ENCODE measurements at regions of chr17 and their contacts with region 1.

Region 1: DNA sequence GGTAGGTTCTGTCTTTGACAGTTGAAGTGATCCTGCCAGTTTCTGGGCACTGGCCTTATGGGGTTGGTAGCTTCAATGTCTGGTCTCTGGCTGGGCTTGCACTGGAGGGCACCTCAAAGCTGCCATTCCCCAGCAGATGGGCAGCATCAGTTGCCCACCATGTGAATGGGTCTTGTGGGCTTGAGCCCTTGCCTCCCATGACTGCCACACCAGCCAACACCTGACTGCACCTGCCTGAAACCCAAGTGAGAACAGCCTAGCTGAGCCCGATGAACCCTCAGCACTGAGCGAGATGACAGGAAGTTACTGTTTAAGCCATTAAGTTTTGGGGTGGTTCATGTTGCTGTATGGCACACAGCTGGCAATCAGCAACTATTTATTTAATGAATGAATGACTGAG is 69.1 kb upstream of the AXIN2 start:
- DNase-seq: no peak
- ATAC-seq: no peak
- H3K4me3 ChIP-seq: no peak overlapping the region
- H3K27ac ChIP-seq: no peak overlapping the region
- H3K4me1 ChIP-seq: no peaks in the 10 kb centered on the region
- H3K27me3 ChIP-seq: no peaks in the 10 kb centered on the region
- CTCF ChIP-seq: no peak
- POLR2A ChIP-seq: no peak

Region 2: DNA sequence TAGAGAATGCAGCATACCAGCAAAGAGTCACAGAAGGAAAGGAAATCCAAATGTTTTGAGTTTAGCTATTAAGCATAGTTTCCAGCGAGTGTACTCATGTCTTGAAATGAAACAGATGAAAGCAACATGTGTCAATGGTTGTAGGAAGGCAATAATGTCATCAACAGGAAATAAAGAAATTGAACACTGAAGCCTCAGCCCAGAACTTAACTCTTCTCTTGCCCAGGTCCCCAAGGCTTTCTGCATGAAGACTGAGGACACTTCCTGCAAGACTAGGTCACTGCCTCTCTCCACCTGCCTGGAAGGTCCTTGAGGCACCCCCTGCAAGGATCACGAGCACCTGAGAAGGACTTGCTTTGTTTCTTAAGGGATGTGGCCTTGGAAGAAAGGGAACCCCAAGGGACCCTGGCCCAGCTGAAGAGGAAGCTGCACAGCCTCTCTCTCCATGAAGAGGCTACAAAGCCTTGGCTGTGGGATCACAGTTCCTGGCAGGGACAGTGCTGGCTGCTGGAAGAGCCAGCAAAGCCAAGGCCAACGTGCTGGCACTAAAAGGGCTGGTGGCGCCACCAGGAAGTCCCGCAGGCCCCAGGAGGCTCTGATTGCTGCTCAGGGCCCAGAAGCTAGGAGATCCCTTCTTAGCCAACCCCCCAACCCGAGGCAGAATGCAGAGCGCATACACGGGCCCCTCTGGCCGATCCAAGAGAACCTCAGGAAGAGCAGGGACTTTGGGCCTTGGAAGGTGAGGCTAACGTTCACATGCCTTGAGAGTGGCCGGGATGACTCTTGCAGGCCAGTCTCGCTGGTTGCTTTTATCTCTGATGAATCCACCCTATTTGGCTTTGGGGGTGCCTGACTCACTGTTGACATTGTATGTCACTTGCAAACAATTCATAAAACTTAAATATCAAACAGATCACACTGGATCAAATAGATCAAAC is 45.6 kb before region 1 on chr17:
- in situ Hi-C with region 1: no loop called
- intact Hi-C with region 1: no loop called
- DNase-seq: peak in 1 of 2 donors; percentile 55
- ATAC-seq: peak; percentile 37 to 78
- H3K4me3 ChIP-seq: no peak overlapping the region
- H3K27ac ChIP-seq: peak overlapping the region in 2 of 4 donors; percentile 11 to 33
- H3K4me1 ChIP-seq: peaks cover 0 to 15% of the 10 kb centered on the region in 2 donors
- H3K27me3 ChIP-seq: no peaks in the 10 kb centered on the region
- CTCF ChIP-seq: no peak
- POLR2A ChIP-seq: no peak

Region 3: GRCh38 chr17:65670667-65671371 is 40.3 kb after region 1 on chr17:
- in situ Hi-C with region 1: no loop called
- intact Hi-C with region 1: loop called (anchors 1 kb)
- DNase-seq: no peak
- ATAC-seq: no peak
- H3K4me3 ChIP-seq: no peak overlapping the region
- H3K27ac ChIP-seq: no peak overlapping the region
- H3K4me1 ChIP-seq: no peaks in the 10 kb centered on the region
- H3K27me3 ChIP-seq: no peaks in the 10 kb centered on the region
- CTCF ChIP-seq: no peak
- POLR2A ChIP-seq: no peak

Region 4: DNA sequence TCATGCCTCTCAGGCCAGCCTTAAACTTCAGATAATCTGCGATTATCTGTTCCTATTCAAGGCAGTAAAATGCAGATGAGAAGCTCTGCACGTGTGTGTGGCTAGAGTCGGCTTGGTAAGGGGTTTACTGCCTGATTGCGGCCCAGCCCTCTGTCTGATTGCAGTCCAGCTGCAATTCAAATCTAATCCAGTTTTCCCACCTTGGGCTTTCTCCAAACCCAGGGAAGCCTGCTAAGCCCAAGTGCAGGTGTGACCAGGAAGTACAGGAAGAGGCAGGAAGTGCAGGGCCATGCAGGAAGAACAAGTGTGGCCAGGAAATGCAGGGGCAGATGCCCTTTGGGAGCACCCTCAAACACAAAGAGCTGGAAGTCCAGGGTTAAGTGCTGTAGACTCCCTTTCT is 246.5 kb after region 1 on chr17:
- in situ Hi-C with region 1: no loop called
- intact Hi-C with region 1: no loop called
- DNase-seq: no peak
- ATAC-seq: no peak
- H3K4me3 ChIP-seq: no peak overlapping the region
- H3K27ac ChIP-seq: no peak overlapping the region
- H3K4me1 ChIP-seq: no peaks in the 10 kb centered on the region
- H3K27me3 ChIP-seq: no peaks in the 10 kb centered on the region
- CTCF ChIP-seq: no peak
- POLR2A ChIP-seq: no peak